Activated CD8-positive, alpha-beta T cell treated with anti-CD3 and anti-CD28 coated beads for 36 hours (primary cell): ENCODE measurements at regions of chr19 and their contacts with region 1.

Region 1: DNA sequence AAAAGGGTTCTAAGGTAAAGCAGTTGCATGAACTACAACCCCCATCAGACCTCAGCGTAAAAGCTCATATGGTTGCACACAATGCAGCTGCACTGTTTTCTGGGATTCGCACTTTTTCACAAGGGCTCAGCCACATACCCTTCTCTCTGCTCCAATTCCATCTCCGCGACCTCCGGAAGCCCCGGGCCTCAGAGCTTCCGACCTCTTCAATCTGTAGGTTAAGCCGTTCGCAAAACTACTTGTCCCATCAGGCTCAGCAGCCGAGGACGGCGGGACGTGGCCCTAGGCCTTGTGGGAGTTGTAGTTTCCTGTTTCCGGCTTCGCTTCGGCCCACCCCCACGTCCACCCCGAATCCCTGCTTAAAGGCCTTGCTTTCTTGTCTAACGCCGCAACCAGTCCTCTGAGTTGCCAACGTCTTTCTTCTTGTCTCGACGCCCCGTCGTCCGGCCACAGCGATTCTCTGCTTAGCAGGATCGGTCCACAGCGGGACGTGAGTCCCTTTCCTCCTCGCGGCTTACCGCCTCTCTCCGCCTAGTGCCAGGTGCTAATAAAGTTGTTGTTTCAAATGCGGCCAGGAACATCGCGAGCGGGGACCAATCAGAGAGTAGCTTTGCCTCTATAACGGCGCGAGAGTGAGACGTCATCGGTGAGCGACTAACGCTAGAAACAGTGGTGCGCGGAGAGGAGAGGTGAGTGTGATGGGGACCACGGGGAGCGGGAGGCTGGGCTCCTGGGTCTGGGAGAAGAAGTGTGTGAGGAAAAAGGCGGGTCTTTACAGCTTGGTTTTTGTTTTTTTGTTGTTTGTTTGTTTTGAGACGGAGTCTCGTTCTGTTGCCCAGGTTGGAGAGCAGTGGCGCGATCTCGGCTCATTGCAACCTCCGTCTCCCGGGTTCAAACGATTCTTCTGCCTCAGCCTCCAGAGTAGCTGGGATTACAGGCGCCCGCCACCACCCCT is at the starts of genes PRPF31 and TFPT:
- DNase-seq: peak; percentile 99
- ATAC-seq: peak; percentile 90
- H3K4me3 Mint-ChIP-seq: peak within 1 kb of the TSS; percentile 94
- H3K27ac Mint-ChIP-seq: peak within 1 kb of the TSS; percentile 97
- H3K4me1 Mint-ChIP-seq: peaks cover 24% of the 10 kb centered on the region
- H3K27me3 Mint-ChIP-seq: no peaks in the 10 kb centered on the region
- CTCF ChIP-seq: no peak
- total RNA-seq, gene PRPF31: 81.1 to 85.2 TPM
- total RNA-seq, gene TFPT: 27.7 to 28.1 TPM

Region 2: GRCh38 chr19:53977429-53977990 is 137.9 kb before region 1 on chr19:
- CTCF ChIA-PET with region 1: no interaction called
- POLR2A ChIA-PET with region 1: no interaction called
- intact Hi-C with region 1: no loop called
- DNase-seq: peak; percentile 77
- ATAC-seq: peak; percentile 71
- H3K4me3 Mint-ChIP-seq: peak overlapping the region; percentile 38
- H3K27ac Mint-ChIP-seq: no peak overlapping the region
- H3K4me1 Mint-ChIP-seq: peaks cover 13% of the 10 kb centered on the region
- H3K27me3 Mint-ChIP-seq: peaks cover 52% of the 10 kb centered on the region
- CTCF ChIP-seq: no peak

Region 3: GRCh38 chr19:54102421-54103169 is 12.8 kb before region 1 on chr19 and contains the start of gene NDUFA3:
- CTCF ChIA-PET with region 1: no interaction called
- POLR2A ChIA-PET with region 1: interaction called, 42 read pairs
- intact Hi-C with region 1: no loop called
- DNase-seq: peak; percentile 98
- ATAC-seq: peak; percentile 99
- H3K4me3 Mint-ChIP-seq: peak within 1 kb of the TSS; percentile 99
- H3K27ac Mint-ChIP-seq: peak within 1 kb of the TSS; percentile 97
- H3K4me1 Mint-ChIP-seq: peaks cover 21% of the 10 kb centered on the region
- H3K27me3 Mint-ChIP-seq: no peaks in the 10 kb centered on the region
- CTCF ChIP-seq: no peak
- total RNA-seq, gene NDUFA3: 94.8 to 96.7 TPM

Region 4: DNA sequence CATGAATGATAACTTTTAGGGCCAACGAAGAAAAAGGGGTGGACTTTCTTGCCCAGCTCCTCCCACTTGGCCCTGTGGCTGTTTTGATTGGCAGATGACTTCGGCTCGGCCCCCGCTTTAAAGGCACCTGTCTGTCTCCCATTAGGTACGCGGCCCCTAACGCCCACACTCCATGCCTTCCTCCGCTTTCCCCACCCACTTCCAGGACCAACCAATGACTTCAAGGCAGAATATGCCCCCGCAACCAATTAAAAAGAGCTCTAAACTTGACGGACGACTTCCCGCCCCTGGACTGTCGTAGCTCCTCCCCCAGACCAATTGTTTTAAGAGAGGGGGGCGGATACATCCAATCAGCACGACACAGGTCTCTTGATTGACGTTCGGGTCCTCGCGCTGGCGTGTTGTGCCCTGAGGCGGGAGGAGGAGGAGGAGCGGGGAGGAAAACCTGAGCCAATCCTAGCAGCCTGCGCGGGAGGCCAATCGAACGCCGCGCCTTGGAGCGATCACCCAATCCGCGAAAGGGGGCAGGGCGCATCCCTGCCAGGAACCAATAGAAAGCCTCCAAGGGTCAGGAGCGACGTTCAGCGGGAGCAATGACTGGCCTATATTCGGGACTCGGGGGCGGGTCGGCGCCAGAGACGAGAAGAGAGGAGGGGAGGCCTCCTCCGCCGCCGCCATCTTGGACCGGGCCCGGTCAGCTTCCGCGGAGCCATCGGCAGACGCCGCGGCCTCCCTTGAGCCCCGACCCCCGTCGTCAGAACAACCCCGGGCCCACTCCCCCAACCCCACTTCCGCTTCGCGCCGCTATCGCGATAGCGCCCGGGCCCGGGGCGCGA is 21.9 kb after region 1 on chr19 and contains the start of gene CNOT3:
- CTCF ChIA-PET with region 1: no interaction called
- POLR2A ChIA-PET with region 1: interaction called, 29 read pairs
- intact Hi-C with region 1: loop called (anchors 2 kb)
- DNase-seq: peak; percentile 100
- ATAC-seq: peak; percentile 85
- H3K4me3 Mint-ChIP-seq: peak within 1 kb of the TSS; percentile 87
- H3K27ac Mint-ChIP-seq: peak within 1 kb of the TSS; percentile 92
- H3K4me1 Mint-ChIP-seq: peaks cover 47% of the 10 kb centered on the region
- H3K27me3 Mint-ChIP-seq: no peaks in the 10 kb centered on the region
- CTCF ChIP-seq: no peak
- total RNA-seq, gene CNOT3: 48.8 to 50.7 TPM

Region 5: DNA sequence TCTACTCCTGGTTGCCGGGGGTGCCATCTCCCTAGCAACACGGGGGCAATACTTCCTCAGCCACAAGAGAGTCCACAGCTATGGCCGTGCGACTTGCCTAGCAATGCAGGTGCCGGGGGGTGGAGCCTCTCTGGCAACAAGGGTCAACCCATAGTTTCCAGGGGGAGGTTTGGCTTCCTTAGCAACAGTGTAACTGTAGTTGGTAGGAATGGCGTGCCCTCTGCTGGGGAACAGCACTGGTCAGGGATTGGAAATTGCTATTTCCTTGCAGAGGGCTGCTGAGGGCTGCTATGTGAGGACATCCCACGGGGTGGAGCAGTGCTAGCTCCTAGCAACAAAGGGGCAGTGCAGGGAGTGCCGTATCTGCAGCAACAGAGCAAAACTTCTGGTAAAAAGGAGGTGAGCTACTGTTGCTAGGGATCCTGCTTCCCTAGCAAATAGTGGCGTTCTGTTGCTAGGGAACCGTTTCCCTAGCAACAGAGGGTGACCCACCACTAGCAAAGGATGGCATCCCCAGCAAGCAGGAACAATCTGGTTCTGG is 64.6 kb after region 1 on chr19:
- CTCF ChIA-PET with region 1: no interaction called
- POLR2A ChIA-PET with region 1: no interaction called
- intact Hi-C with region 1: no loop called
- DNase-seq: no peak
- ATAC-seq: no peak
- H3K4me3 Mint-ChIP-seq: no peak overlapping the region
- H3K27ac Mint-ChIP-seq: no peak overlapping the region
- H3K4me1 Mint-ChIP-seq: no peaks in the 10 kb centered on the region
- H3K27me3 Mint-ChIP-seq: no peaks in the 10 kb centered on the region
- CTCF ChIP-seq: no peak

Region 6: DNA sequence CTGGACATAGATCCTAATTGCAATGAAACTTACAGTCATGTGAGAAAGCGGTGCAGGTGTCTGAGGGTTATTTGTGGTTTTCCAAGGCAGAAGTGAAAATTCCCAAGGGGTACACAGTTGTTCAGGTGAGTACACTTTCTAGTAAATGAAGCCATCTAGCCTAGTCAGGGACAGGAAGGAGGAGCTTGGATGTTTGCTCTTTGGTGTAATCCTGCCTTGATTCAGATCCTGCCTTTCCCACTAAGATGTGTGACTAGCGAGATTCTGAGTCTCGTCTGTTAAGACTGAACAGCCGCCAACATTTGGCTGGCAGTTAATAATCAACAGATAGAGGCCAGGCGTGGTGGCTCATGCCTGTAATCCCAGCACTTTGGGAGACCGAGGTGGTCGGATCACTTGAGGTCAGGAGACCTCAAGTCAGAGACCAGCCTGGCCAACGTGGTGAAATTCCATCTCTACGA is 87.8 kb after region 1 on chr19:
- CTCF ChIA-PET with region 1: no interaction called
- POLR2A ChIA-PET with region 1: interaction called, 18 read pairs
- intact Hi-C with region 1: no loop called
- DNase-seq: no peak
- ATAC-seq: no peak
- H3K4me3 Mint-ChIP-seq: peak overlapping the region; percentile 87
- H3K27ac Mint-ChIP-seq: peak overlapping the region; percentile 62
- H3K4me1 Mint-ChIP-seq: peaks cover 68% of the 10 kb centered on the region
- H3K27me3 Mint-ChIP-seq: no peaks in the 10 kb centered on the region
- CTCF ChIP-seq: no peak